ENCODE measurements at regions of chr12 and their contacts with region 1.

Region 1: DNA sequence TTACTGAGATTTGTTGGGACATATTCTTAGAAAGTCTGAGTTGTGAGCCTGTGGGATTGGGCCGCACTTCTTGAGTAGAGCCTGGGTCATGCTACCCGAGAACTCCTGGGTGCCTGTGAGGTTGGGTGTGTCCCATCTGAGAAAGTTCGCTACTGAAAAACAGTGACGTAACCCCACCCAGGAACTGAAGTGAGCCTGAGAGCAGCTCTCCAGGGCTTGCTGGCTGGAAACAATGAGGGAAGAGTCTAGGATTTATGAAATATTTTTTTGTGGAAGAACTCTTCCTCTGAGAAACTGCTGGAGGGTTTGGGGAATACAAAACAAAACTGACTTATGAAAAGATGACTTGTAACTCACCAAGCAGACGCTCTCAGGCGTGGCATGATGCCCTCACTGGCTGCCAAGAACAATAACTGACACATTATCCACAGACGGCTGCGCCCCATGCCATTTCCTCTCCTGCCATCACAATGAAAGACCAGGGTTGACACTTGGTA is 69.2 kb downstream of the RASSF3 start:
- DNase-seq: peak; percentile 75 to 85
- ATAC-seq: peak; percentile 77

Region 2: GRCh38 chr12:64610149-64610678 is 69.3 kb before region 1 on chr12 and contains the start of gene RASSF3:
- intact Hi-C with region 1: loop called in 1 of 2 experiments (anchors 10 kb)
- DNase-seq: peak; percentile 79 to 83
- ATAC-seq: peak; percentile 67
- total RNA-seq, gene RASSF3: 88.4 to 104 TPM

Region 3: DNA sequence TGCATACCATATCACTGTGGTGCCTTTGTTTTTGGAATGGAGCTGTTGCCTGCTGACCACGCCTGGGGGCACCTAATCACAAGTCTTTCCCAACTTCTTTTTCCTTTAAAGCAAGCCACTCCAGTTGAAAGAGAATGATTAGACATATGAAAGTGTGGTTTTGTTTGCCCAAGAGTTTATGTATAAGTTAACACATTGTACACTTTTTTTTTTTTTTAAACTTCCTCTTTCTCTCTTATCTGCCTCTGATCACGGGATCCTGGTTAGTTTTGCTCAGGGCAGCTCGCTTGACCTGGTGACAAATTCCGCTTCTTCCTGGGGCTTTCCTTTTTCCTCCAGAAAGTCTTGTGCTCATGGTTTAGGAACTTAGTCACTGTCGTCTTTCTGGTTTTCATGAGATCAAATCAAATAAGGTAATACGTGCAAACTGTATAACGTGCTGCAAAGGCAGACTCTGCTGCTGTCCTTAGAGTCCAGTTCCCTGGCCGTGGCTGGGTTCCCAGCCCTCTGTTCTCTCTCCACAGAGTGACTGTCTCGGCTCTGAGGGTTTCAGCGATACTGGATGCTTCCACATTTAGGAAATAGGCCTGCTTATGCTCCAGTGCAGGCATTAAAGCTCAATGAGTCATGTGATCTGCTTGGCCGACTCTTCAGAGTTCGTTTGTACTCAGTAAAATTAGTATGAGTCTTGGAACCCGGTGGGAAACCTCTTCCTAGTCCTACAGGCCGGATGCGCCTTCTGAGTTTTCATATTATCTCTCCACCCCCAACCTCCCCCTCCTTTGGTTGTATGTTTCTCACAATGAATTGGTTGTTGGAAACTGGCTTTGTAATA is 54.1 kb before region 1 on chr12:
- intact Hi-C with region 1: loop called in 1 of 2 experiments (anchors 10 kb)
- DNase-seq: peak; percentile 45 to 82
- ATAC-seq: peak; percentile 92

Region 4: GRCh38 chr12:64790222-64790621 is 110.7 kb after region 1 on chr12:
- intact Hi-C with region 1: no loop called
- DNase-seq: no peak
- ATAC-seq: no peak

Measured in left colon (tissue), 2 donors.